Left ventricle myocardium superior (tissue), 1 donor: ENCODE measurements at regions of chr5 and their contacts with region 1.

Region 1: GRCh38 chr5:41264019-41264418 is 50.7 kb upstream of the C6 start:
- DNase-seq: no peak
- ATAC-seq: peak; percentile 87

Region 2: DNA sequence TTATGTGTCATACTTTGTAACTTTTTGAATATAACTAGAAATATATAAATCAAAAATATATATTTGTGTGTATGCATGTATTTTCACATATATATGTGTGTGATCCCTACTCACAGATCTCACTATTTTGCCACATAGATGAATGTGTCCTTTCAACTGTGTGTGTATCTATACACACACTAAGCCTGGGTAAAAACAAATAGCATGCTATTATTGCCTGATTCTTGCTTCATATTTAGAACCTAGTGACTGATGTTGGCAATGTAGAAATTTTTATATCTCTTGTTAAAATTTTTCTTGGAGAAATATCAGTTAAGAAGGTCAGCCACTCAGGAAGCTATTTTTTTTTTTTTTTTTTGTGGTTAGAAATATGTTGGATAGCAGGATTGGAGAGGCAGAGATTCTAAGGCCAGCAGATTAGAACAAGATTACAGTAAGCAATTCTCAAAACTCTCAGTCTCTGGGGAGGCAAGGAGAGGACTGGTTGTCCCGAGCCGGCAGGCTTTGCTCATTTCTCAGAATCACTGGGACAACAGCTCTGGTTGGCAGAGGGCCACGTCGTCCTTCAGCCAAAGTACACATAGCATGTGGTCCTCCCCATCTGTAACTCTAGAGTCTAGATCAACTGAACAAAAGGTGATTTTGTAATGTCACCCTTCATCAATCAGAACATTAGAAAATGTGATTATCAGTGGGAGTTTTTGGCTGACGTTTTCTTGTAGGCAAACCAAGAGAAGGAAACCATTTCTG is 70.4 kb before region 1 on chr5:
- intact Hi-C with region 1: loop called (anchors 10 kb)
- DNase-seq: peak; percentile 99
- ATAC-seq: peak; percentile 98

Region 3: DNA sequence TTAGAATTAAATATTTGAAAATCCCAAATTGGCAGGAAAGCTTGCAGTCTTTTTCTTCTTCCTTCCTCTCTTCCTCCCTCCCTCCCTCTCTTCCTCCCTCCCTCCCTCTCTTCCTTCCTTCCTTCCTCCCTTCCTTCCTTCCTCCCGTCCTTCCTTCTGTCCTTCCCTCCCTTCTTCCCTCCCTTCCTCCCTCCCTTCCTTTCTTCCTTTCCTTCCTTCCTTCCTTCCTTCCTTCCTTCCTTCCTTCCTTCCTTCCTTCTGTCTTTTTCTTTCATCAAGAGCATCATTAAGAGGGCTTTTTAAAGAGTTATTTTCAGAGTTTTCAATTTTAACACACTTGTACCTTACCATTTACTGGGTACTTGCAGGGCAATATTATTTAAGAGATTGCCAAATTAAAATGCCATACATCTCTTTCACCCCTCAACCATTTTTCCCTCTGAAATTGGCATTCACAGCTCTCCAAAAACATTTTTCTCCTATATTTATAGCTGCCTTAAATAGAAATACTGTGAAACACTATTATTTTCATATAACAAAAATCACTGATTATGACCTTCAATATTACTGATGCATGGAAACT is 48.5 kb after region 1 on chr5:
- intact Hi-C with region 1: no loop called
- DNase-seq: no peak
- ATAC-seq: no peak

Region 4: DNA sequence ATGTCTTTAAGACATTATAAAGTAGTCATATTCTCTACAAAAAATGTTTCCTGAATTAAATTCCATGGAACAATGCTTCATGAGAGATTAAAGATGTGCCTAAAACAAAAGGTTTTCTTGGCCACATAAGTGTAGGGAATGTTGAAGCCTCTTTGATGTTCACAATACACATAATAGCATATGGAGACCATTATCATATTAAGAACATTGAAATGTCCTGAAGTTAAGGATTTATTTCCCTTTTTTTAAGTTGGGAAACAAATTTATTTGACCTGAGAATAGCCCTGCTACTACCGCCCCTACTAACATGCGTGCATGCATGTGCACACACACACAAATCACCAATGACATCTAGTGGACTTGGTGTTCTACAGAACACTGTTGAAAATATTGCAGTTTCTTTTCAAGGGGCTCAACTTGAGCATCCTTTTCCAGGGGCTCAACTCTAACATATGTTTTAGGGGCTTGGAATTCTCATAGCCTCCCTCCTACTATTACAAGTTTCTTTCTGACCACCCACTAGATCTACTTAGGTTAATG is 74.2 kb after region 1 on chr5:
- intact Hi-C with region 1: no loop called
- DNase-seq: no peak
- ATAC-seq: peak; percentile 37

Region 5: DNA sequence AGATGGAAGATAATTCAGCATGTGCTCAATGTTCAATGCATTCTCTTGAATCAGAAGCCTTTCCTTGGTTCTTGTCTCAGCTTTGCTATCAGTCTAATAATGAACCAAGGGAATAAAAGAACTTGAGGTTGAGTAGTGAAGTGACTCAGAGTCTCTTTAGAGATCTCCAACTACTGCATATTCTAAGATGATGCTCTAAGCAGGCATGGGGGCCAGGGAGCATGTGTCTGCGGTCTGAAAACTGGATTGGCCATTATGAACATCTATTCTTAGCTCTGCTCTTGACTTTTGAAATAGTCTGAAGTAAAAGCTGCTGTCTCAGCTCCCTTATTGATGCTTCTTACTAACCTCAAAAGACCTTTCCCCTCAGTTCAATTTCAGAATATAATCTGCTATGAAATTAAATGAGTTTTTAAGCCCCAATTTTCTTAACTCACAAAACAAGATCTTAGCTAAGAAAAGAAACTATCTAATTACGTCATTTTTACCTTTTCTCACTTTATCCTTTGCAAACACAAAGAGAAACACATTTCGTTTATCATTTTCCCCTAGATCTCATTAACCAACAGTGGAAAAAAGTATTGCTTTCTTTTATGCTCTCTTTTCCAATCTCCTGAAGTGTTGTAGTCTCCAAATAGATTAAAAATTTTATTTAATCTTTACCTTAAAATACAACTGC is 201.6 kb after region 1 on chr5:
- intact Hi-C with region 1: no loop called
- DNase-seq: peak; percentile 32
- ATAC-seq: peak; percentile 77

Region 6: DNA sequence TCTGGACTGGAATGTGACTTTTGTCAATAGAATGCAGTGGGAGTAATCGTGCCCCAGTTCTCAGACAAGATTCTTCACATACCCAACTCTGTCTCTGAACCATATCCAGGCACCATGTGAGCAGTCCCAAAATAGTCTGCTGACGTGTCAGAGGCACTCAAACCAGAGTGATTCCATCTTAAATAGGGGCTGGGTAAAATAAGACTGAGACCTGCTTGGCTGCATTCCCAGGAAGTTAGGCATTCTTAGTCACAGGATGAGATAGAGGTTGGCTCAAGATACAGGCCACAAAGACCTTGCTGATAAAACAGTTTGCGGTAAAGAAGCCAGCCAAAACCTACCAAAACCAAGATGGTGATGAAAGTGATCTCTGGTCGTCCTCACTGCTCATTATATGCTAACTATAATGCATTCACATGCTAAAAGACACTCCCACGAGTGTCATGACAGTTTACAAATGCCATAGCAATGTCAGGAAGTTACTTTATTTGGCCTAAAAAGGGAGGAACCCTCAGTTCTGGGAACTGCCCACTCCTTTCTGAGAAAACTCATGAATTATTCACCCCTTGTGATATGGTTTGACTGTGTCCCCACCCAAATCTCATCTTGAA is 263.3 kb after region 1 on chr5:
- intact Hi-C with region 1: loop called (anchors 5 kb)
- DNase-seq: peak; percentile 34
- ATAC-seq: peak; percentile 99